K562 (cell line): ENCODE measurements at regions of chr19 and their contacts with region 1.

Region 1: DNA sequence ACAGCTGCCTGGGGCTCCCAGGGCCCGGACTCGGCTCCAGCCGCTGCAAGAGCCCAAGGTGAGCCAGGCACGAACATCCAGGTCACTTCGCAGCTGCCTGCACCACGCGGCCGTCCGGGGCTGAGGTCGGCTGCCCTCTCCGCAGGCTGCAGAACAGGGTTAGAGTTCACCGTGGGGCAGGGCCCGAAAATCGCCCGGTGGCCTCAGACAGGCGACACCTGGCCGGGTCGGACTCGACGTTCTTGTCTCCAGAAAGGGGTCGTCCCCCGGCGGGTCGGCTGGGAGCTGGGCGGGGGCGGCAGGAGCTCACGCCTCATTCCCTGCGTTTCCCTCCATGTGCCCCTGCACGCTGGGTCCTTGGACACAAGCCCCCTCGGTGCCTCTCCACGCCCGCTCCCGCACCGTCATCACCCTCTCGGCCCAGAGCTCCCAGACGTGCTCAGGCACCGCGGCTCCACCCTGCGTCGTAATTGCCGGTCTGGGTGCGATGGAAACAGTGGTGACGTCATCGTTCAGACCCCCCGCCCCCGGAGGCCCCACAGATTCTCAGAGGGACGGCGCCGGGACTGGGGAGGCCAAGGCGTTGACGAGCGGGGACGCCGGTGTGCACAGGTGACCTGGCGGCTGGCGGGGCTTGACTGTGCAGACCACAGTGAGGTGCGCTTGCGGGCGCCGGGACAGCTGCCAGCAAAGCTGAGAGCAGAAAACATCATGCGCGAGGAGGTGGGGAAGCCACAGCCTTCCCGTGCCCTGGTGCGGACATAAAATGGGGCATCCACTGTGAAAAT is 4.0 kb upstream of the GRIN3B start:
- DNase-seq: peak; percentile 74 to 82 (median 79)
- ATAC-seq: peak; percentile 64
- H3K4me3 ChIP-seq: no peak overlapping the region
- H3K27ac ChIP-seq: no peak overlapping the region
- H3K4me1 ChIP-seq: peaks cover 9 to 77% of the 10 kb centered on the region in 2 experiments
- H3K27me3 ChIP-seq: no peaks in the 10 kb centered on the region
- CTCF ChIP-seq: 0 out of 6 replicates have a peak, but pooled peaks of 1 of the 3 experiments have one; percentile 1
- EP300 ChIP-seq: no peak
- POLR2A ChIP-seq: peak; percentile 60; the same call in 1 of the 2 replicates
- RAD21 ChIP-seq: no peak

Region 2: DNA sequence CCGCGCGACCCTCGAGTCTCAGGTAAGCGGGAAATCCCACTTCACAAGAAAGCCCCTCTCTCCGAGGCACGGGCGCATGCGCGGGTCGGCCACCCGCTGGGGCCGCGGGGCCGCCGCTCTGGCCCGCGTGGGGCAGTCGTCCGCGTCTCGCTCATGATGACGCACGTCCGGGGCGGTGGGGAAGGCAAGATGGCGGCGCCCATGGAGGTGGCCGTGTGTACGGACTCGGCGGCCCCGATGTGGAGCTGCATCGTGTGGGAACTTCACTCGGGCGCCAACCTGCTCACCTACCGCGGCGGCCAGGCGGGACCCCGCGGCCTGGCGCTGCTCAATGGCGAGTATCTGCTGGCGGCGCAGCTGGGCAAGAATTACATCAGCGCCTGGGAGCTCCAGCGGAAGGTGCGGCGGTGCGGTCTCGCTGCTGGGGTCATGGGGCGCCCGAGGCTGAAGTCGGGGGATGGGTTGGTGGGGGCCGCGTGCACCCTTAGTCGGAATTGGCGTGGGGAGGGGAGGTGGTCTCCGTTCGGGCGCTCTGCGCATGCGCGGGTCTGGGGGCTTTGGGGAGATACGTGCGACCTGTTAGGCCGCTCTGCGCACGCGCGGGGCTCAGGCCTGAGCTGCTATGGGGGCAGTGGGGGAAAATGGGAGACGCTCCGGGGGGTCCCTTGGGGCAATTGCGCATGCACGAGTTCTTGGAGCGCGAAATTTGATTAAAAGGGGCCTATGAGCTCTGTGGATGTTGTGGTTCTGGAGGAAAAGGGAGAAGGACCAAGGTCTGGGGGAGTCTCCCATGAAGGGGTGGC is 11.9 kb before region 1 on chr19 and contains the start of gene WDR18:
- CTCF ChIA-PET with region 1: no interaction called
- POLR2A ChIA-PET with region 1: interaction called, 10 read pairs
- in situ Hi-C with region 1: no loop called
- intact Hi-C with region 1: no loop called
- DNase-seq: peak; percentile 94 to 97 (median 95)
- ATAC-seq: peak; percentile 78
- H3K4me3 ChIP-seq: peak within 1 kb of the TSS; percentile 100
- H3K27ac ChIP-seq: peak within 1 kb of the TSS; percentile 91
- H3K4me1 ChIP-seq: peaks cover 24 to 78% of the 10 kb centered on the region in 2 experiments
- H3K27me3 ChIP-seq: no peaks in the 10 kb centered on the region
- CTCF ChIP-seq: no peak
- EP300 ChIP-seq: no peak
- POLR2A ChIP-seq: peak; percentile 78; the same call in 1 of the 2 replicates
- RAD21 ChIP-seq: no peak
- polyA plus RNA-seq, gene WDR18: 0.65 to 1.1 TPM

Region 3: DNA sequence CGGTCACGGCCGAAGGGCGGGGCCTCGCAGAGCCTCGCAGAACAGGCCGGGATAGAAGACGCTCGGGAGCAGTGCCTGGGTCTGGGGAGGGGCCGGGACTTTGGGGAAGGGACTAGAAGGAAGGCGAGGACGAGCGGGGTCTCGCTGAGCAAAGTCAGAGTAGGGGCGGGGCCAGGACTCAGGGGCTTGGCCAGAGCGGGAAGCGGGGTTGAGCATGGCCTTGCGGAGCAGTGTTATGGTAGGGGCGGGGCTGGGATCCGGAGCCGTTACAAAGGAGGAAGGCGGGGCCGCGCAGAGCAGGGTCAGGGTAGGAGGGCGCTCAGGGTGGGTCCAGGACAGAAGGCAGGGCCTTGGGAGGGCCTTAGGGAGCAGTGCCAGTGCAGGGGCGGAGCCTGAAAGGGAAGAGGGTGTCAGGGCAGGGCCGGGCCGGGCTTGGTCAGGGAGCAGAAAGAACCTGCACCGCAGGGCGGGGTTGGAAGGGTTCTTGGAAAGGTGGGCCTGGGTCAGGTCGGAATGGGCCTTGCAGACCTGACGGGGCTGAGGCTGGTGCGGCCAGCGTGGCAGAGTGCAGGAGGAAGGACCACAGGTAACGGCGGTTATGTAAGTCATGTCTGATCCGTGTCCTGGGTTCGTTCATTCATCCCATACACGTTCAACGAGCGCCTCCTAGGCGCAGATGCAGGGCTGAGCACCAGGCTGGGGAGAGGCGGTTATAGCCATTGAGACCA is 816.4 kb after region 1 on chr19:
- CTCF ChIA-PET with region 1: no interaction called
- POLR2A ChIA-PET with region 1: no interaction called
- in situ Hi-C with region 1: no loop called
- intact Hi-C with region 1: no loop called
- DNase-seq: peak; percentile 90 to 97 (median 92)
- ATAC-seq: peak; percentile 95
- H3K4me3 ChIP-seq: peak overlapping the region; percentile 75
- H3K27ac ChIP-seq: peak overlapping the region; percentile 92
- H3K4me1 ChIP-seq: peaks cover 8 to 73% of the 10 kb centered on the region in 2 experiments; a peak in 3 of 5 replicates
- H3K27me3 ChIP-seq: no peaks in the 10 kb centered on the region
- CTCF ChIP-seq: peak; percentile 84 to 94 (median 87)
- EP300 ChIP-seq: no peak
- POLR2A ChIP-seq: peak; percentile 83
- RAD21 ChIP-seq: peak; percentile 55 to 83